ENCODE measurements at regions of chr1 and their contacts with region 1.

Region 1: GRCh38 chr1:209755926-209756614 is at the start of gene TRAF3IP3:
- DNase-seq: peak; percentile 78 to 89 (median 83)
- H3K4me3 ChIP-seq: peak within 1 kb of the TSS; percentile 72 to 81
- H3K4me3 Mint-ChIP-seq: peak within 1 kb of the TSS; percentile 91 to 100 (median 98)
- H3K27ac ChIP-seq: peak within 1 kb of the TSS; percentile 72
- H3K27ac Mint-ChIP-seq: peak within 1 kb of the TSS; percentile 87 to 96 (median 94)
- H3K4me1 ChIP-seq: peaks cover 82% of the 10 kb centered on the region
- H3K4me1 Mint-ChIP-seq: peaks cover 53 to 95% (median 71%) of the 10 kb centered on the region in 4 donors
- H3K27me3 ChIP-seq: no peaks in the 10 kb centered on the region
- H3K27me3 Mint-ChIP-seq: no peaks in the 10 kb centered on the region
- total RNA-seq, gene TRAF3IP3: 571 to 574 TPM

Region 2: GRCh38 chr1:209569455-209570207 is 186.4 kb before region 1 on chr1:
- CTCF ChIA-PET with region 1: no interaction called
- POLR2A ChIA-PET with region 1: no interaction called
- intact Hi-C with region 1: no loop called
- DNase-seq: peak; percentile 61 to 75 (median 61)
- H3K4me3 ChIP-seq: no peak overlapping the region
- H3K4me3 Mint-ChIP-seq: peak overlapping the region in 7 of 8 donors; percentile 34 to 75 (median 57)
- H3K27ac ChIP-seq: no peak overlapping the region
- H3K27ac Mint-ChIP-seq: peak overlapping the region in 5 of 7 donors; percentile 3 to 75 (median 39)
- H3K4me1 ChIP-seq: peaks cover 6% of the 10 kb centered on the region
- H3K4me1 Mint-ChIP-seq: peaks cover 6 to 7% (median 6%) of the 10 kb centered on the region in 4 donors
- H3K27me3 ChIP-seq: peaks cover 15% of the 10 kb centered on the region
- H3K27me3 Mint-ChIP-seq: peaks cover 16 to 31% of the 10 kb centered on the region in 2 donors

Region 3: GRCh38 chr1:209774592-209774991 is 18.5 kb after region 1 on chr1:
- CTCF ChIA-PET with region 1: interaction called, 385 read pairs
- POLR2A ChIA-PET with region 1: interaction called, 1,778 read pairs
- intact Hi-C with region 1: no loop called
- DNase-seq: no peak
- H3K4me3 ChIP-seq: no peak overlapping the region
- H3K4me3 Mint-ChIP-seq: peak overlapping the region in 2 of 8 donors; percentile 7 to 61
- H3K27ac ChIP-seq: no peak overlapping the region
- H3K27ac Mint-ChIP-seq: peak overlapping the region in 5 of 7 donors; percentile 43 to 88 (median 72)
- H3K4me1 ChIP-seq: peaks cover 71% of the 10 kb centered on the region
- H3K4me1 Mint-ChIP-seq: peaks cover 18 to 28% (median 19%) of the 10 kb centered on the region in 4 donors
- H3K27me3 ChIP-seq: no peaks in the 10 kb centered on the region
- H3K27me3 Mint-ChIP-seq: no peaks in the 10 kb centered on the region

Region 4: GRCh38 chr1:209784265-209785169 is 28.4 kb after region 1 on chr1 and contains the start of gene C1orf74:
- CTCF ChIA-PET with region 1: interaction called, 7 read pairs
- POLR2A ChIA-PET with region 1: interaction called, 1,778 read pairs
- intact Hi-C with region 1: loop called (anchors 1 kb)
- DNase-seq: peak; percentile 97 to 99 (median 98)
- H3K4me3 ChIP-seq: peak within 1 kb of the TSS; percentile 49 to 72
- H3K4me3 Mint-ChIP-seq: peak within 1 kb of the TSS; percentile 92 to 99 (median 96)
- H3K27ac ChIP-seq: peak within 1 kb of the TSS; percentile 67
- H3K27ac Mint-ChIP-seq: peak within 1 kb of the TSS; percentile 95 to 100 (median 99)
- H3K4me1 ChIP-seq: peaks cover 21% of the 10 kb centered on the region
- H3K4me1 Mint-ChIP-seq: peaks cover 15 to 35% (median 33%) of the 10 kb centered on the region in 4 donors
- H3K27me3 ChIP-seq: no peaks in the 10 kb centered on the region
- H3K27me3 Mint-ChIP-seq: peaks cover 0 to 3% of the 10 kb centered on the region in 2 donors
- total RNA-seq, gene C1orf74: 1.2 TPM

Region 5: DNA sequence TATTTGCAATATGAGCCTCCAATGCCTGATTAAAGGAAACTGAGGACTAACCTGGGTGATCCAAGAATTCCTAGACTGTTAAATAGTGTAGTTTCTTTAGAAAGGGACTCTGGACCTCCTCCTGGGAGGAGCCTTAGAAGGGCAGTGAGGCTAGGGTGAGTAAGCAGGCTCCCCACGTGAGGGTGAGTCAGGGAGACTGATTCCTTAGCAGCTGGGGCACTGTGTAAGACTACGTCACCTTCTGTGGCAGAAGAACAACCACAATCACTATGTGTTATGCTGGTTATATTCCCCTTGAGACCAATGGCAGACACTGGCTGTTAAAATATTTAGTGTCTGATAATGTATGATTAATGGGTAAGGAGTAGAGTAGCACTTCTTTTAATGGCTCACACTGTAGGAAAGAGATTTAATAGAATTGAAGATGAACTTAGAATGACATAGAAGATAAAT is 128.6 kb after region 1 on chr1:
- CTCF ChIA-PET with region 1: no interaction called
- POLR2A ChIA-PET with region 1: no interaction called
- intact Hi-C with region 1: no loop called
- DNase-seq: peak in 1 of 5 donors; percentile 39
- H3K4me3 ChIP-seq: no peak overlapping the region
- H3K4me3 Mint-ChIP-seq: no peak overlapping the region
- H3K27ac ChIP-seq: no peak overlapping the region
- H3K27ac Mint-ChIP-seq: no peak overlapping the region
- H3K4me1 ChIP-seq: no peaks in the 10 kb centered on the region
- H3K4me1 Mint-ChIP-seq: no peaks in the 10 kb centered on the region
- H3K27me3 ChIP-seq: no peaks in the 10 kb centered on the region
- H3K27me3 Mint-ChIP-seq: peaks cover 29 to 35% of the 10 kb centered on the region in 2 donors